ENCODE measurements at regions of chr17 and their contacts with region 1.

Region 1: DNA sequence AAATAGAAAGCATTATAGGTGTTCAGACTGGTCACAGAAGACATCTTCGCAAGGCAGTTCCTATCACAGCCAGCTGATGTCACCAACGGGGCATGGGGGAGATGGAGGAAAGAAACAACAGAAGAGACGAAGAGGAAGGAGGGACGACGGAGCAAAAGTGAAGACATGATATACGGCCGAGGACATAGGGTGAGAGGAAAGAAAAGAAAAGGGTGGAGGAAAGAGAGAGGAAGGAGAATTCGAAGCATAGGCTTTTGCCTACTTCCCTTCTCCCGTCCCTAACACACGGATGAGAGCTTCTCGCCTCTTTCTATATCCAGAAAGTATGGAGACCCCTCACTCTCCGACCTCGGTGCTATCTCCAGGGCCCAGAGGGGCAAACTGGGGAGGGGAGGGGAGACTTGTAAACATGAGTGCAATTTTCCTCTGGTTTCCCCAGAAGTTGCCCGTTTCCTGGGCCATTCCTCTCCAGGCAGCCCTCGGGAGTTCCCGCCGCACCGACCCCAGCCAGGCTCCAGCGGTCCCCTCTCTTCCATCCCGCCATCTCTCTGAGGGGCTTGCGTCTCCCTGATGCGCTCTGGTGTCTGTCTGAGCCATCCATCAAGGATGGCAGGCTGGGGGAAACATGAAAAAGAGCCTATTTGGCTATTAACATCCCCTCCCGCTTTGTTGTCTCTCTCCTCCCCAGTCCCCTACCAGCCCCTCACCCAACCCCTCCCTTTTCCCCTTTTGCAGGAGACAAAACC is 26.0 kb downstream of the COPZ2 start:
- DNase-seq: peak; percentile 88
- H3K4me3 ChIP-seq: peak overlapping the region; percentile 42
- H3K27ac ChIP-seq: peak overlapping the region; percentile 71
- H3K4me1 ChIP-seq: peaks cover 54% of the 10 kb centered on the region
- H3K27me3 ChIP-seq: no peaks in the 10 kb centered on the region
- CTCF ChIP-seq: peak; percentile 81

Region 2: DNA sequence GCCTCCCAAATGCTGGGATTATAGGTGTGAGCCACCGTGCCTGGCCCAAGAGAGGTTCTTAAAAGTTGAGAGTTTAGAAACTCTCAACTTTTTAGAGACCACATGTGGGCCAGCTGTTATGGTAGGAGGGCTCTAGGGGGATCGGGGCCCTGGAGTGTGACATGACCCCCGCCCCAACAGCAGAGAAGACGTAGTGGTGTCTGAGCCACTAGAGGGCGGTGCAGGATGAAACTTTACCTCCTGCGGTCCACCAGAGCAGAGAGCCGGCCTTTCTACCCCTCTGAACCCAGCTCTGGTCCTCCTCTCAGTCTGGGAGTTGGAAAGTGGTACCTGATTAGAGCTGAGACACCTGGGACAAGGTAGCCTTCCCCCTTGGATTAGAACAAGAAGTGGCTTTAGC is 33.3 kb before region 1 on chr17:
- CTCF ChIA-PET with region 1: interaction called, 23 read pairs
- POLR2A ChIA-PET with region 1: no interaction called
- intact Hi-C with region 1: no loop called
- DNase-seq: peak; percentile 82
- H3K4me3 ChIP-seq: no peak overlapping the region
- H3K27ac ChIP-seq: no peak overlapping the region
- H3K4me1 ChIP-seq: no peaks in the 10 kb centered on the region
- H3K27me3 ChIP-seq: no peaks in the 10 kb centered on the region
- CTCF ChIP-seq: peak; percentile 84

Measured in A673 (cell line).